Activated T-helper 1 cell treated with anti-CD3 and anti-CD28 coated beads, Interleukin-12 subunit alpha, Interleukin-12 subunit beta, Interleukin-2, Interleukin-4 antibody, amounts not matched to agents 30 ng/mL and 10 ng/mL and 1 ng/mL, durations not matched to agents 14 hours and 24 hours and 36 hours (primary cell): ENCODE measurements at regions of chr15 and their contacts with region 1.

Region 1: DNA sequence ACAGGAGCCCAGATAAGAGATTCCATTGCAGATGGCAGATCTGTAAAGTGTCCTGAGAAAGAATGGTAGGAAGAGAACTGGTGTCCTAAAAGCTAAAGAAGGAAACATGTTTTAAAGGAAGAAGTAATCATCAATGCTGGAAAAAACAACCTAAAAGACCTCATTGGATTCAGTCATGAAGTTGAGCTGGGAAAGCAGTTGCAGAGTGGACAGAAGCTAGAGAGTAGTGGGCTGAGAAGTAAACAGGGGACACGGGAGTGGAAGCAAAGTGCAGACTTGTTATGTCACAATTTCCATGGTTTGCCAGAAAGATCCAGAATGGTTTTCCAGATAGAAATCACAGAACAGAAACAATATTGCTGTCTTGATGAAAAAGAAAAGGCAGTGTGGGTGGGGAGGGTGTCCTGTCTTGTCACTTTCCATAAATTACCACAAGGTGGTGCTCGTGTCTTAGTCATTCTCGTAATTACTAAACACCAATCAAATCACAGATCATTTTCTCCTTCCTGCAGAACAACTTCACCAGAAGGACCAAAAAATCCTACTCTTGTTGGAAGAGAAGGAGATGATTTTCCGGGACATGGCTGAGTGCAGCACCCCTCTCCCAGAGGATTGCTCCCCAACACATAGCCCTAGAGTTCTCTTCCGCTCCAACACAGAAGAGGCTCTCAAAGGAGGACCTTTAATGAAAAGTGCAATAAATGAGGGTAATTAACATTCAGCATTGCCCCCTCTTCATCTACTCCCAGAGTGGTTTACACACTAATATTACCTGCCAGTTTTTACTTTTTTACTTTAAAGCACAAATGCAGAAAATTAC is 64.5 kb downstream of the KLHL25 start:
- DNase-seq: peak; percentile 23
- H3K4me3 Mint-ChIP-seq: no peak overlapping the region
- H3K27ac Mint-ChIP-seq: peak overlapping the region; percentile 66
- H3K4me1 Mint-ChIP-seq: peaks cover 19% of the 10 kb centered on the region
- H3K27me3 Mint-ChIP-seq: no peaks in the 10 kb centered on the region

Region 2: GRCh38 chr15:85296615-85297402 is 433.4 kb before region 1 on chr15:
- intact Hi-C with region 1: loop called (anchors 2 kb)
- DNase-seq: peak; percentile 68
- H3K4me3 Mint-ChIP-seq: peak overlapping the region; percentile 34
- H3K27ac Mint-ChIP-seq: no peak overlapping the region
- H3K4me1 Mint-ChIP-seq: peaks cover 18% of the 10 kb centered on the region
- H3K27me3 Mint-ChIP-seq: peaks cover 5% of the 10 kb centered on the region

Region 3: DNA sequence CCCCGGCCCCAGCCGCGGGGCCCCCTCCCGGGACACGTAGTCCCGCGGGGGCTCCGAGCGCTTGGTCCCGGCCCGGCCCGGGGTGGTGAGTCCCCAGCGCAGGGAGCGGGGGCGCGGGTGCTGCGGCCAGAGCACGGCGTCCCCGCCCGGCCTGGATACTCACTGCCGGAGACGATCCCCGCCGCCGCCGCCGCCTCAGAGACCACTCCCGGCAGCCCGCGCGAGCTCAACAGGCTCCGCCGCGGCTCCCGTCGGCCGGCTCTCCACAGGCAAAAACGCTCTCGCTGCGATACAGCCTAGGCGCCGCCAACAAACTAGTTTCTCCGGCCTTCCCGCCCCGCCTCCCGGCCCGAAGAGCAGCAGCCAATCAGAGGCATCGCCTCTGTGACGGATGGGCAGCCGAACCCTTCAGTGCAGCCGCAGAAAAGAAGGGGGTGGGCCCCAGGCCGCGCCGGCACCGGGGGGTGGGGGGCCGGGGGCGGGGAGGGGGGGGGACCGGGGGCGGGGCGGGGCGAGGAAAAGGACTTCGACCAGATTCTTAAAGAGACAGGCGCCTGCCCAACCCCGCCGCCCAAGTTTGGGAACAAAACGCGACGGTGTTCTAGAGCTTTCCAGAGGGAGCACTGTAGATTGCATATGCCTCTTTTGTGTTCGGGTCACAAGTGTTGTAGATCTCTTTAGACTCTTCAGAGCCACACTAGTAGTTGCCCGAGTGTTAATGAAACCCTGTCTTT is 64.6 kb after region 1 on chr15 and contains the start of gene KLHL25:
- intact Hi-C with region 1: loop called (anchors 2 kb)
- DNase-seq: peak; percentile 92
- H3K4me3 Mint-ChIP-seq: peak within 1 kb of the TSS; percentile 91
- H3K27ac Mint-ChIP-seq: peak within 1 kb of the TSS; percentile 83
- H3K4me1 Mint-ChIP-seq: peaks cover 31% of the 10 kb centered on the region
- H3K27me3 Mint-ChIP-seq: peaks cover 4% of the 10 kb centered on the region
- total RNA-seq, gene KLHL25: 10.7 and 11.0 TPM in 2 replicates

Region 4: GRCh38 chr15:85831415-85832113 is 101.4 kb after region 1 on chr15:
- intact Hi-C with region 1: loop called (anchors 2 kb)
- DNase-seq: no peak
- H3K4me3 Mint-ChIP-seq: no peak overlapping the region
- H3K27ac Mint-ChIP-seq: no peak overlapping the region
- H3K4me1 Mint-ChIP-seq: no peaks in the 10 kb centered on the region
- H3K27me3 Mint-ChIP-seq: peaks cover 4% of the 10 kb centered on the region

Region 5: DNA sequence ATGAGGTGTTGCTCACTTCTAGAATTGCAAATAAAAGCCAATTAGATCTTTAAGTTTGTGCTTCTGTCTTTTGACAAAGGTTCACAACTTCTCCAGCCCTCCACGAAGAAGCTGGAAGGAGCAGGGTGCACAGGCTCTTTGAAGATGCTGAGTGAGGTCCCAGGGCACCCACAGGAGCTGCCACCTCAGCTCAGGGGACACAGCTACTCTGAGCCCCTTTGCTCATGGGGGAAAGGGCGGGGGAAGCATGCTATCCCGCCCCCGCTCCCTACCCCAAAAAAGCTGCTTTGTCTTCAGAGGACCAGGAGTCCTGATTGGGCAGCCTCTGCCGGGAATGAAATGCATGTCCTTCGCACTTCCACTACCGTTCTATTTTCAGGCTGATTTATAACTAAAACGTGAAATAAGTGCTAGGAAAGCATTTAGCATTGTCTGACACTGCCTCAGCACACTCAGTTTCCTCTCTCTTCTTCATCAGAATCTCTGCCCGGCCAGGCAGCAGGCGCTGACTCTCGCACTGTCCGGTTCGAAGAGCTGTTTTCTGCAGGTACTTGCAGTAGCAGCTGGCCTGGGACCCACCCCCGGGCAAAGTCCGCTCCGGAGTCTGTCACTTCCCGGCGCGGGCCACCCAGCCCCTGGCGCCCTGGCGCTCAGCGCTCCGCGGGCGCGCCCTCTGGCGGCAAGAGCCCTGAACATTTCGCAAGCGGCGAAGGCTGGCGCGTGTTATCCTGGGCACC is 110.0 kb after region 1 on chr15:
- intact Hi-C with region 1: loop called (anchors 1 kb)
- DNase-seq: peak; percentile 76
- H3K4me3 Mint-ChIP-seq: peak overlapping the region; percentile 29
- H3K27ac Mint-ChIP-seq: no peak overlapping the region
- H3K4me1 Mint-ChIP-seq: no peaks in the 10 kb centered on the region
- H3K27me3 Mint-ChIP-seq: peaks cover 7% of the 10 kb centered on the region